ENCODE measurements at regions of chr1 and their contacts with region 1.

Region 1: GRCh38 chr1:31822766-31823165 is 6.9 kb upstream of the SPOCD1 start:
- DNase-seq: peak in 1 of 3 donors; percentile 23
- ATAC-seq: no peak
- H3K4me3 ChIP-seq: no peak overlapping the region
- H3K27ac ChIP-seq: no peak overlapping the region
- H3K4me1 ChIP-seq: no peaks in the 10 kb centered on the region
- H3K27me3 ChIP-seq: no peaks in the 10 kb centered on the region
- CTCF ChIP-seq: no peak
- POLR2A ChIP-seq: no peak

Region 2: GRCh38 chr1:31959521-31960340 is 137.0 kb after region 1 on chr1:
- intact Hi-C with region 1: loop called in 1 of 2 experiments (anchors 10 kb)
- DNase-seq: peak in 1 of 3 donors; percentile 67
- ATAC-seq: peak; percentile 4 to 63 (median 49)
- H3K4me3 ChIP-seq: no peak overlapping the region
- H3K27ac ChIP-seq: no peak overlapping the region
- H3K4me1 ChIP-seq: peaks cover 0 to 26% (median 9%) of the 10 kb centered on the region in 4 donors
- H3K27me3 ChIP-seq: no peaks in the 10 kb centered on the region
- CTCF ChIP-seq: no peak
- POLR2A ChIP-seq: no peak

Region 3: DNA sequence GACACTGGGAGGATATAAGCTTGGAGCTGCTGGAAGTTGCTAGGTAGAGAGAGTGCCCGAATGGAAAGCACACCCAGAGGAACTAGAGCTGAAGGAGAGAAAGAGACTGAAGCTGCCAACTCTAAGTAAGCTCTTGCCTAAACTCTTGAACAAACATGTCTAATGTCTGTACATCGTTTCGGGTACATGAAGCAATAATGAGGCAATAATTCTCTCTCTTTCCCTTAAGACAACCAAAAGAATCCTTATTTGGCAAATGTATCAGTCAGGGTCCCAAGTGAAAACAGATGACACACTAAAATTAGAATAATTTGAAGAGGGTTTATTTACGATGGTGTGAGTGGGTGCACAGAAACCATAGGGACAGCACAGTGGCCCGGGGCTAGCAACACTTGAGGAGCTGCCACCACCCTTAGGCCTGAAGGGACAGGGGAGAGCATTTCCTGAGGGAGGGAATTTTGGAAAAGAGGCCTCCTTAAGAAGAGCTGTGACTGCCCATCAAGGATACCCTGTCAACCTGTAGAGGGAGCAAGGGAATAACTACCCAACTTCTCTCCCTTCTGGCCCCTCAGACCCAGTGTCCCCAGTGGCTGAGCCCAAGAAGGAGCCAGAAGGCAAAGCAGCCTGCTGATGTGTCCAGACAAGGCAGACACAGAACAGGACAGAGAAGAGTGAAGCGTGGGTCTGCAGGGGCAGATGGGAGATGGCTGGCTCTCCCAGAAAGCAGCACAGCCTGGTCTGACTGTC is 154.8 kb after region 1 on chr1:
- intact Hi-C with region 1: loop called in 1 of 2 experiments (anchors 10 kb)
- DNase-seq: no peak
- ATAC-seq: peak; percentile 18 to 49 (median 38)
- H3K4me3 ChIP-seq: no peak overlapping the region
- H3K27ac ChIP-seq: no peak overlapping the region
- H3K4me1 ChIP-seq: no peaks in the 10 kb centered on the region
- H3K27me3 ChIP-seq: no peaks in the 10 kb centered on the region
- CTCF ChIP-seq: peak in 1 of 4 donors; percentile 11
- POLR2A ChIP-seq: no peak